Left ventricle myocardium superior (tissue), 1 donor: ENCODE measurements at regions of chr3 and their contacts with region 1.

Region 1: DNA sequence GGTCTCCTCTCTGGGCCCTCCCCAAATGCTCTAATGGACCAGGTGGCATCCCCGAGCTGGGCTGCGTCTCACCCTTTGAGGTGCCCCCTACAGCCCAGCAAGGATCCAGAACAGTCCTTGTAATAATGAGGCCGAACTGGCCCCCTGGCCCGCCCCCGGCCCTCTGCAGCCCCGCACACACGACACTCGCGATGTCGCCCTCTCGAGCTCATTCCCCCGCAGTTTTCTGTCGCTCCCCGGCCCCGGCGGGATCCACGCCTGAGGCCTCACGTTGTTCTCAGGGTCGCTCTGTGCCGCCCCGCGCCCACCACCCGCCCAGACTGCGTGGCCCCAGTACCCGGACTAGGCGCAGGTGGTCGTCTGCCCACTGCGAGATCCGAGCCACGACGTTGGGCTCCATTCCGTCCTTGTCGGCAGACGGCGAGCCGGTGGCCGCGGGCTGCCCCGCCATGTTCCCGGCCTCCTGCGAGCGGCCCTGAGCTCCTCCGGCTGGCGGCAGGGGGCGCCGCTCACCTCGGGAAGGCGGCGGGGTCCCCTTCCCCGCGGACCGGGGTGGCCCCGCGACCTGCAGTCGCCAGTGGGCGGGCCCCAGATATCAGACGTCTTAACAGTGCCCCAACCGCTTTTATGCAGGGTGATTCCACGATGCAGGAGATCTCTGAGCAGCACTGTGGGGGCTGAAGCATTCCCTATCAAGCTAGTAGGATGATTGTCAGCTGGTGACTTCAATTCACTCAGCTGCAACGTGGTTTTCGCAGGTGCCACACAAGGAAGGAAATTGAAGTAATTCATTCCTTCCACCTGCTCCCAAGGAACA is at the start of gene C3orf33:
- DNase-seq: peak; percentile 87
- ATAC-seq: peak; percentile 98
- total RNA-seq, gene C3orf33: 7.3 TPM

Region 2: GRCh38 chr3:155859859-155860258 is 53.8 kb after region 1 on chr3:
- intact Hi-C with region 1: no loop called
- DNase-seq: no peak
- ATAC-seq: no peak

Region 3: GRCh38 chr3:155870133-155870944 is 64.3 kb after region 1 on chr3 and contains the start of gene GMPS:
- intact Hi-C with region 1: loop called (anchors 10 kb)
- DNase-seq: peak; percentile 98
- ATAC-seq: peak; percentile 97
- total RNA-seq, gene GMPS: 32.5 TPM